ENCODE measurements at regions of chr7 and their contacts with region 1.

Region 1: DNA sequence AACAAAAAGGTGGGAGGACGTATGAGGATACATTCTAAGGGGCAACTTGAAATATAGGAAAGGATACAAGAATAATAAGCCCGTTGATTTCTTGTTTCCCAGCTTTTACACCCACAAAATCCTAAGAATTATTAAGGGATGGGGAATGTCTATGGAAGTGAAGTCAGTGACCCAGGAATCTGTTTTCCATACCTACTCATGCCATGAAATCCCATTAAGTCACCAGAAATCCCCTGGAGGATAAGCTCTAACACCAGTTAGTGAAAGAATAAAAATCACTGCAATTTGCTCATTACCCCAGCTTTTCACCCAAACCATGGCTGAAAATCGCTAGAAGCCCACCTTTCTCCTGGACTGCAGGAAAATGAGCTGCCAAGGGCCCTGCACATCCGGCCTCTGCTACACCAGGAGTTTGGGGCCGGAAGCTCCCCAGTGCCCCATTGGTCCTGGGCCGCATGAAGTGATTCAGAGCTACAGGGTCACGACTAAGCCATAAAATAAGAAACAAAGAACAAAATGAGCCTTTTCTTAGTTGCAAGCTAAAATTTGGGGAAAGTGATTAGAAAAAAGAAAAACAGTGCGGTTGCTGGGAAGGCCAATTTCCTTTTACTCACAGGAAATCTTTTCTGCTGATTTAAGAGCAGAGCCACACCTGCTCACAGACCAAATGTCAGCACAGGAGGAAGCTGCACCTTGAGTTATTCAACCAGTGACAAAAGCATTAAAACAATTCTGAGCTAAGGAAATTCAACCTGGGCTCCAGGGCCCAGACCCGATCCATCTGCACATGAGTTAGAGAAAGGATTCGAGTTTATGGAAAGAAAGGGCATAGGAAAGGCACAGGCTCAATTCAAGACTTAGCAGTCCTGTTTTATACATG is 40.3 kb downstream of the HIPK2 start:
- DNase-seq: no peak
- ATAC-seq: no peak
- H3K4me3 ChIP-seq: no peak overlapping the region; a peak in 1 of 6 replicates
- H3K27ac ChIP-seq: peak overlapping the region; percentile 65
- H3K4me1 ChIP-seq: peaks cover 85% of the 10 kb centered on the region
- H3K27me3 ChIP-seq: no peaks in the 10 kb centered on the region
- CTCF ChIP-seq: no peak
- EP300 ChIP-seq: no peak
- POLR2A ChIP-seq: no peak
- RAD21 ChIP-seq: no peak

Region 2: DNA sequence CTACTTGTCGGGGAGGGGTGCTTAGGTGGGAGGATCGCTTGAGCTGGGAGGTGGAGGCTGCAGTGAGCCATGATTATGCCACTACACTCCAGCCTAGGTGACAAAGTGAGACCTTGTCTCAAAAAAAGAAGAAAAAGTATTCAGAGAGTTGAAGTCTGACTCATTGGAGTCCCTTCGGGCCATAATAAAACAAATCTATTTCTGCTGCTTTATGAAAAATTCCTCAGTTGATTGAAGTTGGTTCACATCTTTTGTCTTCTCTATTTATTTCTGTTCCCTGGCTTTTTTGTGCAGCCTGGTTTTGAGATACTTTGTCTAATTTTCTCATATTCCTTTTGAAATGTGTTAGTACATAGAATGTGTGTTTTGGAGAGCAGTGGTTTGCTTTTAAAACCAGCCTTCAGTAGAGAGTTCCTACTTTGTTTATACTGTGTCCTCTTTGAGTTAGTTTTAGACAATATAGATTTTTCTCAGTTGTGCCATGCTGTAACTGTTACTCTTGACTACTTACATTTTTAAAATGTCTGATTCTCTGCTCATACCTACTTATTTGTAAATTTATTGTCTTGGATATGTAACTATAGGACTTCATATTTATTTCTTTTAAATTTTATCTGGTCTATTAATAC is 341.0 kb before region 1 on chr7:
- CTCF ChIA-PET with region 1: no interaction called
- POLR2A ChIA-PET with region 1: no interaction called
- in situ Hi-C with region 1: no loop called
- intact Hi-C with region 1: no loop called
- DNase-seq: no peak
- ATAC-seq: no peak
- H3K4me3 ChIP-seq: no peak overlapping the region
- H3K27ac ChIP-seq: no peak overlapping the region
- H3K4me1 ChIP-seq: no peaks in the 10 kb centered on the region
- H3K27me3 ChIP-seq: no peaks in the 10 kb centered on the region
- CTCF ChIP-seq: no peak
- EP300 ChIP-seq: no peak
- POLR2A ChIP-seq: no peak
- RAD21 ChIP-seq: no peak

Region 3: DNA sequence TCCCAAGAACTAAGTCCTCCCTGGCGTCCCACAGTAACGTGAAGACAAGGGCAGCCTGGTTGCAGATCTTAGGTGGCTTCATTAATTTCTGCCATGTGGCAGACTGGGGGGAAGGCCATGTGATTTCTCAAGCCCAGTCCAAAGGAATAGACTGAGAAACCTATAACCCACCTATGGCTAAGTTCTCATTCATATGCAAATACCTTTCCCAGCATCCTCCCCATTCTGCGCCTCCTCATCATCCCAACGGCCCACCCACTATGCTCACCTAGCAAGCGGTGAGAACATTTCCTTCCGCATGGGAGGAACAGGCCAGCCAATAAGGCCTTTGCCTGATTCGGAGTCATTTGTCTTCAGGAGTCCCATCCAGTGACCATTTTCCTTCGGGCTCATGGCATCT is 222.2 kb before region 1 on chr7:
- CTCF ChIA-PET with region 1: no interaction called
- POLR2A ChIA-PET with region 1: no interaction called
- in situ Hi-C with region 1: no loop called
- intact Hi-C with region 1: no loop called
- DNase-seq: no peak
- ATAC-seq: no peak
- H3K4me3 ChIP-seq: no peak overlapping the region
- H3K27ac ChIP-seq: no peak overlapping the region
- H3K4me1 ChIP-seq: no peaks in the 10 kb centered on the region
- H3K27me3 ChIP-seq: peaks cover 1 to 31% of the 10 kb centered on the region in 2 experiments; a peak in 3 of 5 replicates
- CTCF ChIP-seq: no peak
- EP300 ChIP-seq: no peak
- POLR2A ChIP-seq: no peak
- RAD21 ChIP-seq: no peak

Region 4: GRCh38 chr7:139651308-139651707 is 86.2 kb before region 1 on chr7:
- CTCF ChIA-PET with region 1: no interaction called
- POLR2A ChIA-PET with region 1: no interaction called
- in situ Hi-C with region 1: no loop called
- intact Hi-C with region 1: loop called (anchors 10 kb)
- DNase-seq: no peak
- ATAC-seq: no peak
- H3K4me3 ChIP-seq: no peak overlapping the region
- H3K27ac ChIP-seq: no peak overlapping the region
- H3K4me1 ChIP-seq: peaks cover 93% of the 10 kb centered on the region
- H3K27me3 ChIP-seq: no peaks in the 10 kb centered on the region
- CTCF ChIP-seq: no peak
- EP300 ChIP-seq: no peak
- POLR2A ChIP-seq: no peak
- RAD21 ChIP-seq: no peak

Region 5: GRCh38 chr7:139673230-139673629 is 64.2 kb before region 1 on chr7:
- CTCF ChIA-PET with region 1: no interaction called
- POLR2A ChIA-PET with region 1: no interaction called
- in situ Hi-C with region 1: no loop called
- intact Hi-C with region 1: loop called (anchors 2 kb)
- DNase-seq: no peak
- ATAC-seq: no peak
- H3K4me3 ChIP-seq: no peak overlapping the region
- H3K27ac ChIP-seq: peak overlapping the region; percentile 87
- H3K4me1 ChIP-seq: peaks cover 60% of the 10 kb centered on the region
- H3K27me3 ChIP-seq: no peaks in the 10 kb centered on the region
- CTCF ChIP-seq: no peak
- EP300 ChIP-seq: no peak
- POLR2A ChIP-seq: no peak
- RAD21 ChIP-seq: no peak

Region 6: DNA sequence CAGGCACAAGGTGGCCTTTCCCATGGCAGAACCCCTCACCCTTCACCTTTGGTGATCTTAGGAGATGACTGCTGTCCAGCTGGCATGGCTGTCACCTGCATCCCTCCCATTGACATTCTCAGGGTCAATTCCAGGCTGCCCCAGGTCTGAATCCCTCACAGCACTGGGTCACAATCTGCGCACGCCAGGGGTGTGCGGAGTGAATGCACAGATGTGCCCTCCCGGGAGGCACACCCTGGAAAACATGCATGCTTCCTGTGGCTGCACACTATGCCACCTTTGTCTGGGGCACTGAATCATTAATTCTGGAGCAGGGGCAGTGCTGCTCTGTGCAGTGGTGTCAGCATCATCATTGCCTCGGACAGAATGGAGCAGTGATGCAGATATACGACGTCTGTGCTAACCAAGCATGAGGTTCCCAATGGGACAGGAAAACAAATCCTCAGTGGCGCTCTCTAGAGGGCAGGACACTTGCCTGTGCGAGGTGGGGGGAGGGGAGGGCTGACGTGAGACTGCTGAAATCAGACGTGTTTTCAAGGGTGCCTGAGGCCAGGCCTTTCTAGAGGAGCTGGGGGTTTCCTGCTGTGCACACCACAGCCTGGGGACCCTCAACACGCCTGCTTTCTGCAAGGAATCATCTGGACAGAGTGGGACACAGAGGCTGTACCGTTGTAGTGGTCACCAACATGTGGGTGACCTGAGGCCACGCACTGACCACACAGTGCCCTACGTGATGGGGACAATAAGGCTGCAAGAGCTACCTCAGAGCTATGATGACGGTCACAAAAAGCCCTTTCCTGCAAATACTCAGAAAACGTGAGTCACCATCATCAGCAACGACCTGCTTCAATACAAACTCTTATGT is 37.6 kb before region 1 on chr7:
- CTCF ChIA-PET with region 1: no interaction called
- POLR2A ChIA-PET with region 1: no interaction called
- in situ Hi-C with region 1: no loop called
- intact Hi-C with region 1: loop called (anchors 1 kb)
- DNase-seq: no peak
- ATAC-seq: no peak; the same call in 2 of the 3 replicates
- H3K4me3 ChIP-seq: no peak overlapping the region
- H3K27ac ChIP-seq: no peak overlapping the region
- H3K4me1 ChIP-seq: no peaks in the 10 kb centered on the region
- H3K27me3 ChIP-seq: no peaks in the 10 kb centered on the region
- CTCF ChIP-seq: peak; percentile 40; the same call in 1 of the 2 replicates
- EP300 ChIP-seq: no peak
- POLR2A ChIP-seq: no peak
- RAD21 ChIP-seq: no peak

Region 7: GRCh38 chr7:139772115-139772514 is 34.7 kb after region 1 on chr7:
- CTCF ChIA-PET with region 1: no interaction called
- POLR2A ChIA-PET with region 1: interaction called, 6 read pairs
- in situ Hi-C with region 1: no loop called
- intact Hi-C with region 1: loop called (anchors 2 kb)
- DNase-seq: peak; percentile 65
- ATAC-seq: peak; percentile 44
- H3K4me3 ChIP-seq: no peak overlapping the region
- H3K27ac ChIP-seq: peak overlapping the region; percentile 24
- H3K4me1 ChIP-seq: peaks cover 75% of the 10 kb centered on the region
- H3K27me3 ChIP-seq: no peaks in the 10 kb centered on the region; a peak in 1 of 5 replicates
- CTCF ChIP-seq: no peak
- EP300 ChIP-seq: no peak
- POLR2A ChIP-seq: no peak
- RAD21 ChIP-seq: no peak

Region 8: GRCh38 chr7:139799586-139799985 is 62.1 kb after region 1 on chr7:
- CTCF ChIA-PET with region 1: no interaction called
- POLR2A ChIA-PET with region 1: no interaction called
- in situ Hi-C with region 1: no loop called
- intact Hi-C with region 1: no loop called
- DNase-seq: no peak
- ATAC-seq: no peak
- H3K4me3 ChIP-seq: no peak overlapping the region
- H3K27ac ChIP-seq: no peak overlapping the region
- H3K4me1 ChIP-seq: no peaks in the 10 kb centered on the region
- H3K27me3 ChIP-seq: no peaks in the 10 kb centered on the region
- CTCF ChIP-seq: no peak
- EP300 ChIP-seq: no peak
- POLR2A ChIP-seq: no peak
- RAD21 ChIP-seq: no peak